PC-3 (cell line): ENCODE measurements at regions of chr4 and their contacts with region 1.

Region 1: DNA sequence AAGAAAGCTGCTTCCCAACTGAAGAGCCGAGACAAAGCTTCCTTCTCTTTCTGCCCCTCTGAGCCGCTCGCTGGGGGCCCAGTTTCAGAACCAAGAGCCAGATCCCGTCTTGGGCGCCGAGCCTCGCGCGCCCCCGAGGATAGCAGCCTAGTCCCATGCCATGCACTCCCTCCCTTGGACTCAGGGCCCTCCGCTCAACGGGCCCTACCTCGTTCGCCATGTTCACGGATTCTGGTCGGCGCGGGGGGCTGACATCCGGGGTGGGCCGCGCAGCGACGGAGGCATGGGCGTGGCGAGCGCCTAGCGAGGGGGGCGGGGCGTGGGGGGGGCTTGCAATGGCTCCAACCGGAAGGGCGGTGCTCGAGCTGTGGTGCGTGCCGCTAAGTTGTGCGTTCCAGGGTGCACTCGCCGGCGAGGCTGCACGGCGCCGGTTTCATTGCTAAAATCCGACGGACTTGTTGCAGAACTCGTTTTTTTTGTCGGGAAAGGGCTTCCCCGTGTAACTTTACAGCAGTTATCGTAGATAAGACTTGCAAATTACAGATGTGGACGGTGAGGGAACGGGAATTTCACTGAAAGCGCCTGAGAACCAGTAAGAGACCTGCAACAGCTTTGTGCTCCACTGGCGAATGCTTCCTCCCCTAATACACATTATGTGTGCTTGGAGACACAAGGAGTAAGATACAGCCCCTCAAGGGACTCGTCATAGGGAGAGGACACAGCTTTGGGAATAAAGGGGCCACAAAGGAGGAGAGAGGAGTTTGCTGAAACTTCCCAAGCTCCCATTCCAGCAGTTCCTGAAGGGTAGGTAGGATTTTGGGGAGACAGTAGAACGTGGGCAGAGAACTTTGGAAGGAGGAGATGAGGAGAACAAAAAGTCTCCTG is at the start of gene ADH5:
- DNase-seq: peak; percentile 71
- ATAC-seq: peak; percentile 85
- H3K4me3 ChIP-seq: peak within 1 kb of the TSS; percentile 91
- H3K27ac ChIP-seq: peak within 1 kb of the TSS; percentile 53
- H3K4me1 ChIP-seq: peaks cover 5% of the 10 kb centered on the region; the same call in 1 of the 2 replicates
- H3K27me3 ChIP-seq: no peaks in the 10 kb centered on the region
- CTCF ChIP-seq: no peak
- total RNA-seq, gene ADH5: 83.1 and 94.5 TPM in 2 replicates

Region 2: DNA sequence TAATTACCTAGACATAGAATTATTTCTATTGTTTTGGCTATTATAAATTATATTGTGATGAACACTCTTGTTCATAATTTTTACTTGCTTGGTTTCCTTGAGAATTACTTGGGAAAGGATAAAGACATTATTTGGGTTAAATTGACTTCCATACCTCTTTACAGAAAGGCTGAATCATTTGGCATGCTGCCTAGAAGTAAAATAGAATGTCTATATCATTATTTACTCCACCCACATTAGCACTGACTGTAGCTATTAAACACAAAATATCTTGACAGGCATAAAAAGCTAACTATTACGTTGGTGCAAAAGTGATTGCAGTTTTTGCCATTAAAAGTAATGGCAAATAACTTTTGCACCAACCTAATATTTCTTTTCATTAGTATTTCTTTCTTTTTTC is 160.0 kb after region 1 on chr4:
- CTCF ChIA-PET with region 1: no interaction called
- POLR2A ChIA-PET with region 1: interaction called, 10 read pairs
- intact Hi-C with region 1: no loop called
- DNase-seq: peak; percentile 63
- ATAC-seq: peak; percentile 45; the same call in 1 of the 2 replicates
- H3K4me3 ChIP-seq: no peak overlapping the region
- H3K27ac ChIP-seq: no peak overlapping the region
- H3K4me1 ChIP-seq: no peaks in the 10 kb centered on the region
- H3K27me3 ChIP-seq: no peaks in the 10 kb centered on the region
- CTCF ChIP-seq: no peak

Region 3: DNA sequence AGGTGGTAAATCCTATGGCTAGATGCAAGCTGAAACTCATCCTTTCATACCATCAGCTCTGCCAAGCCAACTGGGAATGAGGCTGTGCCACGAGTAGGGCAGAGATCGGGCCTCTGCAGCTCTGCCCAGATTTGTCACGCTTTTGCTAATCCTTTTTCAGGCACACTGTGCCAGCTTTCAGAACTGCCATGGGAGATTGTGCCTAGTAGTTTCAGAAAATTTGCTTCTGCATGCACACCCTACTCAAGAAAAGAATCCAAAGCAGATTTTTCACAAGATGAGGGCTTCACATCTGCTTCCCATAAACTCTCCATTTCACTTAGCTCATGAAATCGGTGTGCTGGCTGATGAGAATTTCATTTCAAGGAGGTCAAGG is 349.7 kb after region 1 on chr4:
- CTCF ChIA-PET with region 1: no interaction called
- POLR2A ChIA-PET with region 1: no interaction called
- intact Hi-C with region 1: no loop called
- DNase-seq: no peak
- ATAC-seq: no peak
- H3K4me3 ChIP-seq: no peak overlapping the region
- H3K27ac ChIP-seq: no peak overlapping the region
- H3K4me1 ChIP-seq: no peaks in the 10 kb centered on the region
- H3K27me3 ChIP-seq: no peaks in the 10 kb centered on the region
- CTCF ChIP-seq: no peak